Naive thymus-derived CD4-positive, alpha-beta T cell (primary cell): ENCODE measurements at regions of chr13 and their contacts with region 1.

Region 1: GRCh38 chr13:47545201-47546024 is 455.7 kb downstream of the SUCLA2 start:
- DNase-seq: no peak
- ATAC-seq: no peak
- H3K4me3 ChIP-seq: no peak overlapping the region
- H3K4me3 Mint-ChIP-seq: no peak overlapping the region
- H3K27ac ChIP-seq: no peak overlapping the region
- H3K27ac Mint-ChIP-seq: no peak overlapping the region
- H3K4me1 ChIP-seq: no peaks in the 10 kb centered on the region
- H3K4me1 Mint-ChIP-seq: no peaks in the 10 kb centered on the region
- H3K27me3 ChIP-seq: no peaks in the 10 kb centered on the region
- H3K27me3 Mint-ChIP-seq: peaks cover 0 to 3% (median 0%) of the 10 kb centered on the region in 5 donors

Region 2: DNA sequence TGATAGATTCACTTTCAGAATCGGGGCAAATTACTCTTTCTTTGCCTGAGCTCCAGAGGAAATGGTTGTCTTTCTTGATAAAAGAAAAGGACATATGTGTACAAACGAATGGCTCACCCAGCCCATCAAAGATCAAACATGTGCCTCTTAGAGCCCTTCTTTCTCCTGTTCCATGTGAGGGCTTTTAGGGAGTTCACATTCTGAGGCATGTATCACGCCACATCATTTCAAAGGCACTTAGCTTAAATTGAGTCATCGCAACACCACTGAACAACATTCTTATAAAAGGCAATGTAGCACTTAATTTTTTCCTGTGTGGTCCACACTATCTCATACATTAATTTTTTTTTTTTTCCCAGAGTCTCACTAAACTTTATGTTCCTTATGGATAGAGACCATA is 65.3 kb before region 1 on chr13:
- CTCF ChIA-PET with region 1: no interaction called
- POLR2A ChIA-PET with region 1: no interaction called
- intact Hi-C with region 1: no loop called
- DNase-seq: no peak
- ATAC-seq: no peak
- H3K4me3 ChIP-seq: no peak overlapping the region
- H3K4me3 Mint-ChIP-seq: no peak overlapping the region
- H3K27ac ChIP-seq: no peak overlapping the region
- H3K27ac Mint-ChIP-seq: no peak overlapping the region
- H3K4me1 ChIP-seq: no peaks in the 10 kb centered on the region
- H3K4me1 Mint-ChIP-seq: peaks cover 0 to 3% (median 0%) of the 10 kb centered on the region in 7 donors
- H3K27me3 ChIP-seq: no peaks in the 10 kb centered on the region
- H3K27me3 Mint-ChIP-seq: peaks cover 0 to 10% (median 3%) of the 10 kb centered on the region in 5 donors

Region 3: DNA sequence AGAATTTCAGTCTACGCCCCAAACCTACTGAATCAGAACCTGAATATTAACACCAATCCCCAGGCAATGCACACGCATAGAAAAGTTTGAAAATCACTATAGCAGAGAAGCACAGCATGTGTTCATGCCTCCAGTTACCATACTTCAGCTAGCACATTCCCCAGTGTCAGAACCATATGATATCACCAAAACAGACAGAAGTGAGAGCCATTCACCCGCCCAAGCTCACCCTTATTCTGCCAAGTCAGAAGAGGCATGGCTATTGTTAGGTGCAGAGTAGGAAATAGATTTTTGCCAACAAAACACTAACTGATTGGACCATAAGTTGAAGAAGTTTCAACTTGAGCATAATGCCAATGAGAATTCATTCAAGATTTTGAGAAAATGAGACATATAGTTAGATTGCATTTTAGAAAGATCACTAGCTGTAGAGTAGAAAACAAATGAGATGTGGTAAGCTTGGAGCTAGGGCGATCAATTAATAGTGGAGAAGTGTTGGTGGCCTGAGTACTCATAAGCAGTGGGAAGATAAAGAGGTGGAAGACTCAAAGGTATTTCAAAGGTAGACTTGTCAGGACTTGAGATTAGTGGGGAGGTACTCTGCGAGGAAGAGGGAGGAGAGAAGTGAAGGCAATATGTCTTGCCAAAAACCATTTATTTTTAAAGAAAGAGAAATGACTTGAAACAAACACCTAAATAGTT is 36.7 kb before region 1 on chr13:
- CTCF ChIA-PET with region 1: no interaction called
- POLR2A ChIA-PET with region 1: no interaction called
- intact Hi-C with region 1: loop called in 1 of 2 experiments (anchors 1 kb)
- DNase-seq: no peak
- ATAC-seq: no peak
- H3K4me3 ChIP-seq: no peak overlapping the region
- H3K4me3 Mint-ChIP-seq: no peak overlapping the region
- H3K27ac ChIP-seq: no peak overlapping the region
- H3K27ac Mint-ChIP-seq: no peak overlapping the region
- H3K4me1 ChIP-seq: no peaks in the 10 kb centered on the region
- H3K4me1 Mint-ChIP-seq: no peaks in the 10 kb centered on the region
- H3K27me3 ChIP-seq: no peaks in the 10 kb centered on the region
- H3K27me3 Mint-ChIP-seq: peaks cover 0 to 6% (median 0%) of the 10 kb centered on the region in 5 donors